ENCODE measurements at regions of chr22 and their contacts with region 1.

Region 1: GRCh38 chr22:24848559-24849168 is 42.7 kb downstream of the SGSM1 start:
- DNase-seq: no peak
- H3K4me3 ChIP-seq: no peak overlapping the region
- H3K27ac ChIP-seq: no peak overlapping the region
- H3K4me1 ChIP-seq: no peaks in the 10 kb centered on the region
- H3K27me3 ChIP-seq: no peaks in the 10 kb centered on the region
- CTCF ChIP-seq: no peak
- EP300 ChIP-seq: no peak
- POLR2A ChIP-seq: no peak

Region 2: GRCh38 chr22:24768537-24769374 is 79.9 kb before region 1 on chr22:
- intact Hi-C with region 1: loop called (anchors 1 kb)
- DNase-seq: no peak
- H3K4me3 ChIP-seq: no peak overlapping the region
- H3K27ac ChIP-seq: no peak overlapping the region
- H3K4me1 ChIP-seq: no peaks in the 10 kb centered on the region
- H3K27me3 ChIP-seq: peaks cover 0 to 23% (median 2%) of the 10 kb centered on the region in 4 donors
- CTCF ChIP-seq: peak; percentile 56 to 76 (median 73)
- EP300 ChIP-seq: no peak
- POLR2A ChIP-seq: no peak

Region 3: DNA sequence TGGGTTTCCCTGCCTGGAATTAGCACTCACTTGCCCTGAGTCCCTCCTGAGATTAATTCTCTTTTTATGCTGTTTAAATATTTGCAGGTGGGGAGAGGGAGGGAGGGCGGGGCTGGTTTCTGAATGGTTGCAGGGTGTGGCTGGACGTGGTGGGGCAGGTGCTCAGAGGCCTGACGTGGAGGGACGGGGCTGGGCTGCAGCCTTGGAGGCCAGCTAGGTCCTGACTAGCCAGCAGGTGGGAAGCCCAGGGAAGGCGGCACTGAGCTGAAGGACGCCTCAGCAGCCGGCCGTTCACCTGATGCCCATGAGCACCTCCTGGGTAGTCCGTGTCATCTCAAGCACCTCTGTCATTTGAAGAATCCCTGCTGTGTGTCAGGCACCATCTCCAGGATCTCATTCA is 21.4 kb before region 1 on chr22:
- intact Hi-C with region 1: no loop called
- DNase-seq: no peak
- H3K4me3 ChIP-seq: no peak overlapping the region
- H3K27ac ChIP-seq: no peak overlapping the region
- H3K4me1 ChIP-seq: no peaks in the 10 kb centered on the region
- H3K27me3 ChIP-seq: no peaks in the 10 kb centered on the region
- CTCF ChIP-seq: no peak
- EP300 ChIP-seq: no peak
- POLR2A ChIP-seq: no peak

Measured in esophagus muscularis mucosa (tissue), 4 donors.